CD4-positive, alpha-beta memory T cell (primary cell): ENCODE measurements at regions of chr2 and their contacts with region 1.

Region 1: GRCh38 chr2:219119422-219120043 is 41.1 kb downstream of the NHEJ1 start:
- DNase-seq: peak; percentile 27 to 42 (median 37)
- H3K4me3 ChIP-seq: no peak overlapping the region
- H3K4me3 Mint-ChIP-seq: no peak overlapping the region
- H3K27ac ChIP-seq: no peak overlapping the region
- H3K27ac Mint-ChIP-seq: no peak overlapping the region
- H3K4me1 ChIP-seq: peaks cover 5% of the 10 kb centered on the region
- H3K4me1 Mint-ChIP-seq: peaks cover 7 to 11% (median 8%) of the 10 kb centered on the region in 4 donors
- H3K27me3 ChIP-seq: no peaks in the 10 kb centered on the region
- H3K27me3 Mint-ChIP-seq: no peaks in the 10 kb centered on the region

Region 2: GRCh38 chr2:219029829-219030165 is 89.7 kb before region 1 on chr2:
- CTCF ChIA-PET with region 1: interaction called, 12 read pairs
- POLR2A ChIA-PET with region 1: no interaction called
- intact Hi-C with region 1: loop called (anchors 1 kb)
- DNase-seq: peak; percentile 69 to 76 (median 73)
- H3K4me3 ChIP-seq: no peak overlapping the region
- H3K4me3 Mint-ChIP-seq: no peak overlapping the region
- H3K27ac ChIP-seq: no peak overlapping the region
- H3K27ac Mint-ChIP-seq: peak overlapping the region in 1 of 7 donors; percentile 21
- H3K4me1 ChIP-seq: no peaks in the 10 kb centered on the region
- H3K4me1 Mint-ChIP-seq: peaks cover 0 to 1% (median 0%) of the 10 kb centered on the region in 4 donors
- H3K27me3 ChIP-seq: no peaks in the 10 kb centered on the region
- H3K27me3 Mint-ChIP-seq: peaks cover 16 to 21% of the 10 kb centered on the region in 2 donors

Region 3: DNA sequence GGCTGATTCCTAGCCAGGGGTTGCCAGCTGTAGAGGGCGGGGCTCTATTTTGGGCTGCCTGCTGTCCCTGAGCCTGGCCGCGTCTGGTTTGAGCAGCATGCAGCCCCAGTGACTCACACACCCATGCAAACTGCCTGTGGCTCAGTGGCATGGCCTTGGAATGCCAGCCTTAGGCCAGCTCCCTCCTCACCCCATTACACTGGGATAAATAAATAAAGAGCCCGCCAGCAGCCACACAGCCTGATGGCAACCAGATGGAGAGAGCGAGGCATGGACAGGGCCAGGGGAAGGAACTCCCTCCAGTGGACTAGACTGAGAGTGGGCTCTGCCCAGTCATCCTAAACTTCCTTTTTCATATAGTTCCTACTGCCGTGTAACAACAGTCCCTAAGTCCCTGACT is 22.8 kb after region 1 on chr2:
- CTCF ChIA-PET with region 1: interaction called, 37 read pairs
- POLR2A ChIA-PET with region 1: no interaction called
- intact Hi-C with region 1: no loop called
- DNase-seq: no peak
- H3K4me3 ChIP-seq: no peak overlapping the region
- H3K4me3 Mint-ChIP-seq: no peak overlapping the region
- H3K27ac ChIP-seq: no peak overlapping the region
- H3K27ac Mint-ChIP-seq: peak overlapping the region in 1 of 7 donors; percentile 60
- H3K4me1 ChIP-seq: no peaks in the 10 kb centered on the region
- H3K4me1 Mint-ChIP-seq: peaks cover 0 to 5% (median 1%) of the 10 kb centered on the region in 4 donors
- H3K27me3 ChIP-seq: no peaks in the 10 kb centered on the region
- H3K27me3 Mint-ChIP-seq: no peaks in the 10 kb centered on the region